ENCODE measurements at regions of chr4 and their contacts with region 1.

Region 1: GRCh38 chr4:83237591-83237990 is 47.0 kb downstream of the COQ2 start:
- DNase-seq: no peak
- ATAC-seq: no peak
- H3K4me3 ChIP-seq: no peak overlapping the region
- H3K4me3 Mint-ChIP-seq: no peak overlapping the region
- H3K27ac ChIP-seq: no peak overlapping the region
- H3K27ac Mint-ChIP-seq: no peak overlapping the region
- H3K4me1 ChIP-seq: peaks cover 28% of the 10 kb centered on the region
- H3K4me1 Mint-ChIP-seq: peaks cover 56% of the 10 kb centered on the region
- H3K27me3 ChIP-seq: no peaks in the 10 kb centered on the region
- H3K27me3 Mint-ChIP-seq: no peaks in the 10 kb centered on the region
- CTCF ChIP-seq: no peak

Region 2: DNA sequence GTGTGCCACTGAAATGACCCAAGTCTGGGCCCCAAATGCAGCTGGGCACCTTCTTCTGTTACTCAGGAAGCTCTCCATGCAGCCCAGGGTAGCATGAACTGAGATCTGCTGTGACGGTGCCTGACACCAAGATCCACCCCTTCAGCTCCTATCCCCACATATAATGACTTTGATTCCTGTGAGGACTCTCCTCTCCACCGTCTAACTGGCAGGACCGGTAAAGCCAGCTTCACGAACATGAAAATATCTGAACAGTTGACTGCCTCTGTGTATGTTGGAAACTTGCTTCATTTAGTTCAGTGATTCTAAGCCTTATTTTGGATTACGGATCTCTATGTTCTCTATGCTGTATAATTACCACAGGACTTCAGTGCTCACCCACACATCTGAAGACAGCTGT is 560.3 kb before region 1 on chr4:
- CTCF ChIA-PET with region 1: no interaction called
- POLR2A ChIA-PET with region 1: no interaction called
- intact Hi-C with region 1: no loop called
- DNase-seq: no peak
- ATAC-seq: no peak
- H3K4me3 ChIP-seq: no peak overlapping the region
- H3K4me3 Mint-ChIP-seq: no peak overlapping the region
- H3K27ac ChIP-seq: no peak overlapping the region
- H3K27ac Mint-ChIP-seq: no peak overlapping the region
- H3K4me1 ChIP-seq: no peaks in the 10 kb centered on the region
- H3K4me1 Mint-ChIP-seq: no peaks in the 10 kb centered on the region
- H3K27me3 ChIP-seq: peaks cover 2 to 4% of the 10 kb centered on the region in 2 experiments
- H3K27me3 Mint-ChIP-seq: peaks cover 5% of the 10 kb centered on the region
- CTCF ChIP-seq: no peak

Region 3: GRCh38 chr4:83174844-83175414 is 62.7 kb before region 1 on chr4:
- CTCF ChIA-PET with region 1: no interaction called
- POLR2A ChIA-PET with region 1: no interaction called
- intact Hi-C with region 1: no loop called
- DNase-seq: no peak
- ATAC-seq: no peak
- H3K4me3 ChIP-seq: no peak overlapping the region
- H3K4me3 Mint-ChIP-seq: no peak overlapping the region
- H3K27ac ChIP-seq: no peak overlapping the region
- H3K27ac Mint-ChIP-seq: no peak overlapping the region
- H3K4me1 ChIP-seq: peaks cover 4% of the 10 kb centered on the region
- H3K4me1 Mint-ChIP-seq: peaks cover 6% of the 10 kb centered on the region
- H3K27me3 ChIP-seq: no peaks in the 10 kb centered on the region
- H3K27me3 Mint-ChIP-seq: no peaks in the 10 kb centered on the region
- CTCF ChIP-seq: no peak

Region 4: GRCh38 chr4:83217721-83218522 is 19.7 kb before region 1 on chr4:
- CTCF ChIA-PET with region 1: no interaction called
- POLR2A ChIA-PET with region 1: interaction called, 17 read pairs
- intact Hi-C with region 1: loop called in 1 of 2 experiments (anchors 2 kb)
- DNase-seq: peak; percentile 35 to 94 (median 54)
- ATAC-seq: peak; percentile 89
- H3K4me3 ChIP-seq: peak overlapping the region; percentile 17
- H3K4me3 Mint-ChIP-seq: peak overlapping the region; percentile 74
- H3K27ac ChIP-seq: peak overlapping the region; percentile 74 to 76
- H3K27ac Mint-ChIP-seq: peak overlapping the region; percentile 89
- H3K4me1 ChIP-seq: peaks cover 69% of the 10 kb centered on the region
- H3K4me1 Mint-ChIP-seq: peaks cover 71% of the 10 kb centered on the region
- H3K27me3 ChIP-seq: no peaks in the 10 kb centered on the region
- H3K27me3 Mint-ChIP-seq: no peaks in the 10 kb centered on the region
- CTCF ChIP-seq: no peak

Measured in CD4-positive, alpha-beta T cell (primary cell).